Caco-2 (cell line): ENCODE measurements at regions of chr10 and their contacts with region 1.

Region 1: DNA sequence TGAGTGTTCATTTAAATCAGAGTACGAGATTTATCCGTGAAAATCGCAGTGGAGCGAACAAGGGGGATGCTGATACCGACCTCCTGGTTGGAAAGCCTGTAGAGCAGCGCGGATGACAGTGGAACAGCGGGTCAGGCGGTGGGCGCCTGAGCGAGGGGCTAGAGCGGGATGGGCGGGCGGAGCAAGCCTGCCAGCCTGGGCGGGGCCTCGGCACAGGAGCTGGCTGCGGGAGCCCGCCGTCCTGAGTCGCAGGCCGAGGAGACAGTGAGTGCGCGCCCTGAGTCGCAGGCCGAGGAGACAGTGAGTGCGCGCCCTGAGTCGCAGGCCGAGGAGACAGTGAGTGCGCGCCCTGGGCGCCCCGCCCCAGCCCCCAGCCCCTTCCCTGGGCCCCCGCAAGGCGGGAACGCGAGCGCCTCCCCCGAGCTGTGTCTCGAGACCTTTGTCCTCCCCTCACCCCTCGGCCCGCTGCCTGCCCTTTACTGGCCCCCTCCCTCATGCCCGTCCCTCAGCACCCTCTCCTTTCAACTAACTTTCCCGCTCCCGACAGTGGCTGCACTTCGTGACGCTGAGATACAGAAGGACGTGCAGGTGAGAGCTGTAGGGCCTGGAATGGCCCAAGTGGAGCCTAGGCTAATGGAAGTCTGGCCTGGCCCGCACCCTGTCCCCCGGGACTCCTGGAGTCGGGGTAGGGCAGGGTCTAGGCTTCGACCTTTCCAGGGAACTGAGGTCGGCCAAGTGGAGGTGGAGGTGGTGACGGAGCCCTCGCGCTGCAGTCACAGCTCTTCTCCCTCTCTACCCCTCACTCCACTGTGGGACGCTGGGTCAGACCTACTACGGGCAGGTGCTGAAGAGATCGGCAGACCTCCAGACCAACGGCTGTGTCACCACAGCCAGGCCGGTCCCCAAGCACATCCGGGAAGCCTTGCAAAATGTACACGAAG is at the start of gene AS3MT:
- DNase-seq: peak; percentile 86 to 87
- H3K4me3 ChIP-seq: peak within 1 kb of the TSS; percentile 50
- H3K4me3 Mint-ChIP-seq: peak within 1 kb of the TSS; percentile 78
- H3K27ac Mint-ChIP-seq: peak within 1 kb of the TSS; percentile 40
- H3K4me1 ChIP-seq: peaks cover 6% of the 10 kb centered on the region; the same call in 1 of the 2 replicates
- H3K4me1 Mint-ChIP-seq: peaks cover 9% of the 10 kb centered on the region
- H3K27me3 ChIP-seq: no peaks in the 10 kb centered on the region
- H3K27me3 Mint-ChIP-seq: no peaks in the 10 kb centered on the region
- CTCF ChIP-seq: no peak
- total RNA-seq, gene AS3MT: 6.4 and 8.6 TPM in 2 replicates

Region 2: DNA sequence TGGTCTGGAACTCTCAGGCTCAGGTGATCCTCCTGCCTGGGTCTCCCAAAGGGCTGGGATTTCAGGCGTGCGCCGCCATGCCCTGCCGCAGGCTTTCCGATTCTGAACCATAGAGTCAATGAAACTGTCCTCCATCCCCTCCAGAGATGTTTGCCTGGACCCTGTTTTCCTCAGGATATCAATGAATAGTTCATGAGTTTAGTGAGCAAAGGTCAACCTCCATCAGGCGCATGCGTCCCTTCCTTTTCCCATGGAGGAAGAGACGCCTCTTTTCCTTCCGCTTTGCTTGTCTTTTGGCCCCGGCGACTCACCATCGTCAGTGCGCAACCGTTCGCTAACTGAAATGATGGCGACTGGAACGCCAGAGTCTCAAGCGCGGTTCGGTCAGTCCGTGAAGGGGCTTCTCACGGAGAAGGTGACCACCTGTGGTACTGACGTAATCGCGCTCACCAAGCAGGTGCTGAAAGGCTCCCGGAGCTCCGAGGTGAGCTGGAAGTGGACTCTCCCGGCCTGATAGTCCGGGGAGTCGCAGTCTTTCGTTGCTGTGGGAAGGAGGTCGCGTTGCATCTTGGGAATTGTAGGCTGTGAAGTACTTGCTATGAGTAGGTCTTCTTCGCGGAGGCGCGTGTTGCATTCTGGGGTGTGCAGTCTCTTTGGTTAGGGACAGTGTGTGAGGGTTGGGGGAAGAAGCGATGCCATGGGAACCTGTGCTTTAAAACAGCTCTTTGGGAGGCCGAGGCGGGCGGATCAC is 15.4 kb before region 1 on chr10 and contains the start of gene BORCS7:
- CTCF ChIA-PET with region 1: interaction called, 4 read pairs
- POLR2A ChIA-PET with region 1: interaction called, 9 read pairs
- intact Hi-C with region 1: loop called (anchors 1 kb)
- DNase-seq: peak; percentile 93 to 97
- H3K4me3 ChIP-seq: peak within 1 kb of the TSS; percentile 83
- H3K4me3 Mint-ChIP-seq: peak within 1 kb of the TSS; percentile 96
- H3K27ac Mint-ChIP-seq: peak within 1 kb of the TSS; percentile 93
- H3K4me1 ChIP-seq: no peaks in the 10 kb centered on the region
- H3K4me1 Mint-ChIP-seq: peaks cover 7% of the 10 kb centered on the region
- H3K27me3 ChIP-seq: no peaks in the 10 kb centered on the region
- H3K27me3 Mint-ChIP-seq: no peaks in the 10 kb centered on the region
- CTCF ChIP-seq: no peak
- total RNA-seq, gene BORCS7: 12.3 and 12.6 TPM in 2 replicates

Region 3: GRCh38 chr10:103125323-103126267 is 256.1 kb after region 1 on chr10:
- CTCF ChIA-PET with region 1: no interaction called
- POLR2A ChIA-PET with region 1: no interaction called
- intact Hi-C with region 1: no loop called
- DNase-seq: no peak
- H3K4me3 ChIP-seq: no peak overlapping the region
- H3K4me3 Mint-ChIP-seq: no peak overlapping the region
- H3K27ac Mint-ChIP-seq: no peak overlapping the region
- H3K4me1 ChIP-seq: peaks cover 34% of the 10 kb centered on the region
- H3K4me1 Mint-ChIP-seq: peaks cover 8% of the 10 kb centered on the region
- H3K27me3 ChIP-seq: no peaks in the 10 kb centered on the region
- H3K27me3 Mint-ChIP-seq: no peaks in the 10 kb centered on the region
- CTCF ChIP-seq: no peak